Heart right ventricle (tissue), 16 donors: ENCODE measurements at regions of chr15 and their contacts with region 1.

Region 1: GRCh38 chr15:41621200-41622193 is 38.7 kb upstream of the MGA start:
- DNase-seq: peak; percentile 77 to 79
- ATAC-seq: peak; percentile 89 to 93 (median 90)
- H3K4me3 ChIP-seq: peak overlapping the region; percentile 29 to 70 (median 63)
- H3K27ac ChIP-seq: peak overlapping the region; percentile 29 to 88 (median 66)
- H3K4me1 ChIP-seq: peaks cover 0 to 22% (median 15%) of the 10 kb centered on the region in 9 donors
- H3K27me3 ChIP-seq: no peaks in the 10 kb centered on the region
- CTCF ChIP-seq: no peak

Region 2: GRCh38 chr15:41276821-41277220 is 344.7 kb before region 1 on chr15:
- intact Hi-C with region 1: no loop called
- DNase-seq: no peak
- ATAC-seq: no peak
- H3K4me3 ChIP-seq: no peak overlapping the region
- H3K27ac ChIP-seq: no peak overlapping the region
- H3K4me1 ChIP-seq: no peaks in the 10 kb centered on the region
- H3K27me3 ChIP-seq: no peaks in the 10 kb centered on the region
- CTCF ChIP-seq: no peak

Region 3: DNA sequence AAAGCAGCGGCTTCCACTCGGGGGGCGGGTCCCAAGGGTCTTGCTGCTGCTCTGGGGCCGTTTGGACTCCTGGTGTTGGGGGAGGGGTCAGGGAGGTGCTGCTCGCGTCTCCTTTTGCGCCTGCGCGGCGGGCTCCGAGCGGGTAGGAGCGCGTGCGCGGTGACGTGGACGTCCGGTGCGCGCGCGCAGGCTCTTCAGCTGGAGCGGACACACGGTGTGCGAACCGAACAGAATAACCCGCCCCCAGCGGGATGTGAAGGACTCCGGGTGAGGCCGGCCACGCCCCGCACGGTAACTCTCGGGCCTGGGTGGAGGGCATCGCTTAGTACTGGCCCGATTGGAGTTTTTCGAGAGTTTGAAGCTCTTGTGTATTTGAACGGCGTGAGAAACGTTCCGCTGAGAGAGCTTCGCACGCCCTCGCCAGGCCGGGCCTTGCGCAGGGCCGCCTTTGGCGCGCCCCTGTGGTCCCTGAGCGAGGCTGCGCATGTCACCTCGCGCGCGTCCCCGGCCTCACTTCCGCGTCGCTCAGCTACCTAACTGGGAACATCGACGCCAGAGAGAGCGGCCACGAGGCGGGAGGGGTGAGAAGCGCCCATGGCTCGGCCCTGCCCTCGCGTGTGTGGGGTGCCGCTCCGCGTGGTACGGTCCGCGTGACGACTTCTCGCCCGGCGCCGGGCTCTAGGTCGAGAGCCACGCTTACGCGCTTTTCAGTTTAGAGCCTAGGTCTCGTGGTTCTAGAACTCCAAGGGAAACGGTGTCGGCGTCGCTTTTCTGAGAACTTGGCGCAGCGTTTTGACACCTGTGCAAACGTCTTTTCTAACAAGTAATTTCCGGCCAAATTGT is 39.0 kb after region 1 on chr15 and contains the start of gene MGA:
- intact Hi-C with region 1: loop called in 2 of 10 experiments (anchors 5 kb)
- DNase-seq: peak; percentile 90 to 91
- ATAC-seq: peak; percentile 94 to 96 (median 95)
- H3K4me3 ChIP-seq: peak within 1 kb of the TSS; percentile 41 to 68 (median 60)
- H3K27ac ChIP-seq: peak within 1 kb of the TSS; percentile 19 to 88 (median 82)
- H3K4me1 ChIP-seq: peaks cover 0 to 51% (median 40%) of the 10 kb centered on the region in 9 donors
- H3K27me3 ChIP-seq: no peaks in the 10 kb centered on the region
- CTCF ChIP-seq: peak in 5 of 9 donors; percentile 19 to 49 (median 32)
- total RNA-seq, gene MGA: 22.2 to 45.3 (median 35.9) TPM